ENCODE measurements at regions of chr6 and their contacts with region 1.

Region 1: DNA sequence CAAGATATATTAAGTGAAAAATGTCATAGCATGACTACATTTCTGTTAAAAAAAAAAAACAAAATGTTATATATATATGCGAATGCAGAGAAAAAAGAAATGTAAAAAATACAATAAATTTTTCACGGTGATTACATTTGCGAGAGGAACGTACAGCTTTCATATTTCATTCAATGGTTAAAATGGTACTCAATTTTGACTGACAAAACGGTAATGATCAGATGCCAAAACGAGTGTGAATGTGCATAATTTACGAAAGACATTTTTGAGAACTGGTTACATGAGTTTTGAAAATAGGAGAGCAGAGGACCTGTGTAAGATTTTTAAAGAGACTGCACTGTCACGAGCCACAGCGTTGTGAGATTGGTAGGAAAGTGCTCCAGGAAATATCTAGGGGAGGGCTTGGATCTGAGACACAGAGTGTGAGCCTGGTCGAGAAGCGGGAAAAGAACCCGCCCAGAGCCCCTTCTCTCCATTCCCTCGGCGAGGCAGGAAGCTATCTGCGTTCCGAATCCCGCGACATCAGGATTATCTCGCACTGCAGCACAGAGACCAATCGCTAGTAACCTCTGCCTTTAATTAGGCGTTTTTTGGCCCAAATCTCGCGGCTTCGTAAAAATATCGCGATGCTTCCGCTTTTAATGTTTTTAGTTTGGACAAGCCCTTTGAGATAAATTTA is 28.5 kb downstream of the TRIM27 start:
- DNase-seq: peak; percentile 66
- ATAC-seq: peak; percentile 66
- H3K4me3 Mint-ChIP-seq: peak overlapping the region; percentile 97
- H3K27ac Mint-ChIP-seq: peak overlapping the region; percentile 99
- H3K4me1 Mint-ChIP-seq: peaks cover 23% of the 10 kb centered on the region
- H3K27me3 Mint-ChIP-seq: peaks cover 3% of the 10 kb centered on the region
- CTCF ChIP-seq: no peak

Region 2: DNA sequence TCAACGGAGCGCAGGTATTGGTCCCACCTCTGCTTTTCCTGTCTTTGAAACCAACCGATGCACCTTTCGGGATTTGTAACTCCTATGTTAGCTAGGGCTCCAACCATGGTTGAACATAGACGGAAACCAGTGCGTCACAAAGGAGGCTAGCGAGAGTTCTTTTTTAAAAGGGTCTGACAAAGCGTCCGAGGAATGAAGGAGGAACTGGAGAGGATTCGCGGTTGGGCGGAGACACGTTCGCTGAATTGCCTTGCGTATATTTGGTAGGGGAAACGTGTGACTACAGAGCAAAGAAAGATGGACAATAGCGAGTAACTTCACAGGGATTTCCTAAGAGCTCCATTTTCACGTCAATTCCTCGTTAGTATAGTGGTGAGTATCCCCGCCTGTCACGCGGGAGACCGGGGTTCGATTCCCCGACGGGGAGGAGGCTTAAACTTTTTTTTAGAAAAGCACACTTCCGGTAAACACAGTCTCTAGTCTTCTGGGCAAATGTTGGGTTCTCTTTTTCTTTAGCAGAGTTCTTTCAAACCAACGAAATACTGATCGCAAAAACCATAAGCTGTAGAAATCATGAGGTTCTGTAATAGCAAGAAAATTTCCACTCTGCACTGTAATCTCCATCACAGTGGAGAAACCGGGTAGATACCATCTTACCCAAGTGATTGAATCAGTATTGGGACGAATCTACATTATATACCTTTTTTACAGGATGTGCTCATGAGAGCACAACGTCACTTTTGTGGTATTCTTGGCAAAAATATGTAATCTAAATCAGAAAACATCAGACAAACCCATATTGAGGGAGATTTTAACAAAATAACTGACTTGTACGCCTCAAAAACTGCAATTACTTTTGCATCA is 1415.7 kb before region 1 on chr6:
- CTCF ChIA-PET with region 1: no interaction called
- POLR2A ChIA-PET with region 1: interaction called, 6 read pairs
- intact Hi-C with region 1: loop called (anchors 1 kb)
- DNase-seq: peak; percentile 84
- ATAC-seq: peak; percentile 76
- H3K4me3 Mint-ChIP-seq: no peak overlapping the region
- H3K27ac Mint-ChIP-seq: no peak overlapping the region
- H3K4me1 Mint-ChIP-seq: peaks cover 9% of the 10 kb centered on the region
- H3K27me3 Mint-ChIP-seq: no peaks in the 10 kb centered on the region
- CTCF ChIP-seq: no peak

Region 3: DNA sequence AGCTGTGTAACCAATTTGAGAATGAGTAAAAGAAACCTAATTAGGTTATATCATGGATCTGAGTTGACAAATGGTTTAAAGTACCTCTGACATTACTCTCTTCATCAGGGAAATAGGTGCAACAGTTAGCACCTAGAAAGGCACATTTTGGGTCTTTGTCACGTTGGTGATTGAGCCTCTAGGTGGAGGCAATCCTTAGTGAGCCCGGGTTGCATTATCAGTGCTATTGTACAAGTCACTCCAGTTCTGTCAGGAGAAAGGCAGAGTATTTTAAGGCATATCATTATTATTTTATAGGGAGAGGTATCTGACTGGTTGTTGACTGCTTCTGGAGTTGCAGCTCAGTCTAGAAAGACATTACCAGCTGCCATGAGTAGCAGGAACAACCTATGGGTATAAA is 26.4 kb before region 1 on chr6:
- CTCF ChIA-PET with region 1: interaction called, 7 read pairs
- POLR2A ChIA-PET with region 1: interaction called, 33 read pairs
- intact Hi-C with region 1: loop called (anchors 1 kb)
- DNase-seq: no peak
- ATAC-seq: no peak
- H3K4me3 Mint-ChIP-seq: no peak overlapping the region
- H3K27ac Mint-ChIP-seq: no peak overlapping the region
- H3K4me1 Mint-ChIP-seq: peaks cover 15% of the 10 kb centered on the region
- H3K27me3 Mint-ChIP-seq: peaks cover under 1% of the 10 kb centered on the region
- CTCF ChIP-seq: no peak

Region 4: GRCh38 chr6:28923318-28924102 is 28.2 kb after region 1 on chr6 and contains the start of gene TRIM27:
- CTCF ChIA-PET with region 1: interaction called, 3 read pairs
- POLR2A ChIA-PET with region 1: interaction called, 80 read pairs
- intact Hi-C with region 1: loop called (anchors 1 kb)
- DNase-seq: peak; percentile 85
- ATAC-seq: peak; percentile 87
- H3K4me3 Mint-ChIP-seq: peak within 1 kb of the TSS; percentile 92
- H3K27ac Mint-ChIP-seq: peak within 1 kb of the TSS; percentile 92
- H3K4me1 Mint-ChIP-seq: peaks cover 42% of the 10 kb centered on the region
- H3K27me3 Mint-ChIP-seq: no peaks in the 10 kb centered on the region
- CTCF ChIP-seq: no peak
- total RNA-seq, gene TRIM27: 59.5 and 64.8 TPM in 2 replicates

Region 5: DNA sequence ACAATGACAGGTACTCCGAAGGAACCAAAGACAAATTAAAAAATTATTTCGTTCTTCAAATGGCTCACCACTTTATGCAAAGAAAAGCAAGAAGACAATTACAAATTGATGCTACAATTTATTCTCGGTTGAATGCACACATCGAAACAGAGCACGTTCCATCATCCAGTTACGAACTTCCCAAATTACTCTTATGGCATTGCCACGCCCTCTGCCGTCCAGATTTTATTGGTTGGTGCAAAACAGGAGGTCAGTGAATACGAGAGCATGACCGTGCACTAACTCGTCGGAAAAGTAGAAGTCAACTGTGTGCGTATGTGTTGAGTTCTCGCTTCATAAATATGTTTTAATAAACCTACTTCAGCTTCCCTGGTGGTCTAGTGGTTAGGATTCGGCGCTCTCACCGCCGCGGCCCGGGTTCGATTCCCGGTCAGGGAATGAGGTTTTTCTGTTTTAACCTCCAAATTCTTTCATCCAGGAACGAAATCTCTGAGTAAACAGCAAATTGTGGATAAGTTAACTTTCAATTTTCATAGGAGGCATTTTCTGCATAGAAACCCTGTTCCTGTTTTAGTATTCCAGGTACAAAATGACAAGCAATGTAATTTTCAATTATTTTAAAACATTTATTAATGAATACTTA is 86.7 kb after region 1 on chr6:
- CTCF ChIA-PET with region 1: no interaction called
- POLR2A ChIA-PET with region 1: interaction called, 5 read pairs
- intact Hi-C with region 1: loop called (anchors 1 kb)
- DNase-seq: peak; percentile 65
- ATAC-seq: peak; percentile 61
- H3K4me3 Mint-ChIP-seq: peak overlapping the region; percentile 89
- H3K27ac Mint-ChIP-seq: peak overlapping the region; percentile 97
- H3K4me1 Mint-ChIP-seq: peaks cover 50% of the 10 kb centered on the region
- H3K27me3 Mint-ChIP-seq: peaks cover 32% of the 10 kb centered on the region
- CTCF ChIP-seq: no peak

Region 6: GRCh38 chr6:30326526-30327260 is 1431.4 kb after region 1 on chr6 and contains the start of gene TRIM39:
- CTCF ChIA-PET with region 1: no interaction called
- POLR2A ChIA-PET with region 1: no interaction called
- intact Hi-C with region 1: loop called (anchors 5 kb)
- DNase-seq: peak; percentile 90
- ATAC-seq: peak; percentile 68
- H3K4me3 Mint-ChIP-seq: peak within 1 kb of the TSS; percentile 96
- H3K27ac Mint-ChIP-seq: peak within 1 kb of the TSS; percentile 99
- H3K4me1 Mint-ChIP-seq: peaks cover 57% of the 10 kb centered on the region
- H3K27me3 Mint-ChIP-seq: no peaks in the 10 kb centered on the region
- CTCF ChIP-seq: no peak
- total RNA-seq, gene TRIM39: 21.6 and 22.0 TPM in 2 replicates

Measured in activated B cell treated with CpG ODN at 0.5 μM for 24 hours (primary cell).